ENCODE measurements at regions of chr6 and their contacts with region 1.

Region 1: GRCh38 chr6:41306187-41306854 is 19.8 kb upstream of the TREM1 start:
- DNase-seq: no peak
- ATAC-seq: peak; percentile 68
- H3K4me3 ChIP-seq: no peak overlapping the region
- H3K27ac ChIP-seq: no peak overlapping the region
- H3K4me1 ChIP-seq: peaks cover 3% of the 10 kb centered on the region; the same call in 1 of the 2 replicates
- H3K27me3 ChIP-seq: no peaks in the 10 kb centered on the region; a peak in 1 of 4 replicates
- CTCF ChIP-seq: peak; percentile 50 to 66 (median 63)
- EP300 ChIP-seq: no peak
- POLR2A ChIP-seq: no peak
- RAD21 ChIP-seq: peak; percentile 74

Region 2: GRCh38 chr6:41072676-41073623 is 233.4 kb before region 1 on chr6 and contains the start of gene NFYA:
- CTCF ChIA-PET with region 1: interaction called, 11 read pairs
- POLR2A ChIA-PET with region 1: interaction called, 4 read pairs
- RAD21 ChIA-PET with region 1: no interaction called
- SMC1A ChIA-PET with region 1: no interaction called
- in situ Hi-C with region 1: no loop called
- intact Hi-C with region 1: no loop called
- DNase-seq: no peak
- ATAC-seq: peak; percentile 85
- H3K4me3 ChIP-seq: peak within 1 kb of the TSS; percentile 88
- H3K27ac ChIP-seq: peak within 1 kb of the TSS; percentile 99
- H3K4me1 ChIP-seq: peaks cover 7% of the 10 kb centered on the region; the same call in 1 of the 2 replicates
- H3K27me3 ChIP-seq: no peaks in the 10 kb centered on the region
- CTCF ChIP-seq: peak in 2 of 3 experiments; percentile 32 to 34; a peak in 4 of 6 replicates
- EP300 ChIP-seq: no peak
- POLR2A ChIP-seq: peak; percentile 33
- RAD21 ChIP-seq: no peak
- polyA plus RNA-seq, gene NFYA: 6.4 to 7.3 TPM

Region 3: GRCh38 chr6:41159415-41160082 is 146.8 kb before region 1 on chr6:
- CTCF ChIA-PET with region 1: no interaction called
- POLR2A ChIA-PET with region 1: no interaction called
- RAD21 ChIA-PET with region 1: no interaction called
- SMC1A ChIA-PET with region 1: no interaction called
- in situ Hi-C with region 1: no loop called
- intact Hi-C with region 1: no loop called
- DNase-seq: no peak
- ATAC-seq: no peak
- H3K4me3 ChIP-seq: no peak overlapping the region
- H3K27ac ChIP-seq: no peak overlapping the region
- H3K4me1 ChIP-seq: no peaks in the 10 kb centered on the region
- H3K27me3 ChIP-seq: peaks cover 0 to 2% of the 10 kb centered on the region in 2 experiments; a peak in 1 of 4 replicates
- CTCF ChIP-seq: no peak
- EP300 ChIP-seq: no peak
- POLR2A ChIP-seq: no peak
- RAD21 ChIP-seq: no peak

Region 4: DNA sequence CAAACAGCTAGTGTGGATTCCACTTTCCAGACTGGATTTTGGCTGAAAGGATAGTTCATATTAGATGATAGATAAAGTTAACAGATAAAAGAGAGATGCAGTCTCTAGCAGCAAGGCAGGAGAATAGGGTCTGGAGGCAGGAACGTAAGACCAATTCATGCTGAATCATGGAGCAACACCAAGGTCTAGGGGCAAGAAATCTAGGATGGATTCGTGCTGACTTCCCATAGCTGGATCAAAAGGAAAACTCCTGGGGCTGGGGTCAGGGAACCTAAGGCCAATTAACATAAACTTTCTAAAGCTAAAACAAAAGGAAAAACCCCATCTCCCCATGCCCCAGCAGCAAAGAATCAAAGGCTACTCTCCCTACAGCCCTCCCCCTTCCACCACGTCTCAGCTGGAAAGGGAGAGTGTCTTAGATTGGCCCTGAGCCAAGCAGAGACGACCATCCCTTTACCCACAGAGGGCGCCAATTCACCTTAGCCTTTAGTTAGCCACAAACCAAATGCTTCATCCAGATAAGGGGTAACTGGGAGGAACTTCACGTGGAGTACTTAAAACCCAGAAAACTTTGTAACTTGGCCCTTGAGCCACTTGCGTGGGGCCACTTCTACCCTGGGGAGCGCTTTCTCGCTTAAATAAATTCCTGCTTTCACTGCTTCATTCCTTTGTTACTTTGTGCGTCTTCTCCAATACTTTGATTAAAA is 27.5 kb before region 1 on chr6:
- CTCF ChIA-PET with region 1: interaction called, 68 read pairs
- POLR2A ChIA-PET with region 1: interaction called, 3 read pairs
- RAD21 ChIA-PET with region 1: interaction called, 23 read pairs
- SMC1A ChIA-PET with region 1: interaction called, 28 read pairs
- in situ Hi-C with region 1: no loop called
- intact Hi-C with region 1: no loop called
- DNase-seq: no peak
- ATAC-seq: peak; percentile 78
- H3K4me3 ChIP-seq: no peak overlapping the region
- H3K27ac ChIP-seq: no peak overlapping the region
- H3K4me1 ChIP-seq: no peaks in the 10 kb centered on the region
- H3K27me3 ChIP-seq: no peaks in the 10 kb centered on the region
- CTCF ChIP-seq: peak; percentile 58 to 65 (median 65)
- EP300 ChIP-seq: no peak
- POLR2A ChIP-seq: no peak
- RAD21 ChIP-seq: peak; percentile 79

Region 5: DNA sequence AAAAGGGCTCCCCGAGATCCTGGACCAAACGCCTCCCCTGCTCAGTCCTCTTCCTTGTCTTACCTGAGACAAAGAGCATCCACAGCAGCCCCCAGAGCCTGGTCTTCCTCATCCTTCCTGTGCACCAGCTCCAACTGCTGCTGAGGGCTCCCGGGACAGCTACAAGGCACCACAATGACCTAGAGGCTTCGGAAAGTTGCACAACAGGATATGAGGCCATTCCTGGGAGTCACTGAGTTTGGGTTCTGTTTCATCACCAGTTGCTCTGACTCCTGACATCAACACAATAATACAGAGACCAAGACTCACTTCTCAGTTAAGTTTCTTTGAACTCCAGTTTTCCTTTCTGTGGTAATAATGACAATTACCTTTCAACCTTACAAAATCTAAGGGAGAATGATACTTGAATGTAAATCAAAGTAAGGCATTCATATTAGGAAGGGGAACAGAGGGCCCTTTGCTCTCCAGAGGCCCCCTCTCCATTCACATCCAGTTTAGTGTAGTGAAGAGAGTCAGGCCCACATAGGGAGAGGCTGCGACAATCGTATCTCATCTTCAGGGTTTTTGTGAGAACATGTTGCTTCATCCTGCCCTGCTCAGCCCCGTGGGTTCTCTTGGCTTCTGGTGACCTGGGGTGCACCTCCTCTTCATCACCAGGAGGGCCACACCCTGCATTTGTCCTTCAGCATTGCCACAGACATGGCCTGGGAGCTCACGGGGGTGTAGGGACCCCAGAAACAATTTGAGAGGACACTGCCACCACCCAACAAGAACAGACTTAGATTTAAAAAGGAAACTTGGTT is 19.6 kb before region 1 on chr6 and contains the start of gene TREM1:
- CTCF ChIA-PET with region 1: interaction called, 53 read pairs
- POLR2A ChIA-PET with region 1: interaction called, 4 read pairs
- RAD21 ChIA-PET with region 1: interaction called, 8 read pairs
- SMC1A ChIA-PET with region 1: interaction called, 33 read pairs
- in situ Hi-C with region 1: no loop called
- intact Hi-C with region 1: no loop called
- DNase-seq: no peak
- ATAC-seq: no peak
- H3K4me3 ChIP-seq: no peak within 1 kb of the TSS
- H3K27ac ChIP-seq: no peak within 1 kb of the TSS
- H3K4me1 ChIP-seq: no peaks in the 10 kb centered on the region
- H3K27me3 ChIP-seq: no peaks in the 10 kb centered on the region
- CTCF ChIP-seq: no peak
- EP300 ChIP-seq: no peak
- POLR2A ChIP-seq: no peak
- RAD21 ChIP-seq: no peak
- polyA plus RNA-seq, gene TREM1: 0.11 to 0.69 TPM

Region 6: GRCh38 chr6:41560431-41561192 is 254.3 kb after region 1 on chr6:
- CTCF ChIA-PET with region 1: no interaction called
- POLR2A ChIA-PET with region 1: no interaction called
- RAD21 ChIA-PET with region 1: no interaction called
- SMC1A ChIA-PET with region 1: no interaction called
- in situ Hi-C with region 1: no loop called
- intact Hi-C with region 1: no loop called
- DNase-seq: no peak
- ATAC-seq: peak; percentile 92
- H3K4me3 ChIP-seq: peak overlapping the region; percentile 53
- H3K27ac ChIP-seq: peak overlapping the region; percentile 42; the same call in 1 of the 2 replicates
- H3K4me1 ChIP-seq: peaks cover 5% of the 10 kb centered on the region; the same call in 1 of the 2 replicates
- H3K27me3 ChIP-seq: no peaks in the 10 kb centered on the region
- CTCF ChIP-seq: 0 out of 6 replicates have a peak, but pooled peaks of 1 of the 3 experiments have one; percentile 3
- EP300 ChIP-seq: no peak
- POLR2A ChIP-seq: peak; percentile 60
- RAD21 ChIP-seq: 0 out of 2 replicates have a peak, but pooled peaks have one; percentile 4

Region 7: DNA sequence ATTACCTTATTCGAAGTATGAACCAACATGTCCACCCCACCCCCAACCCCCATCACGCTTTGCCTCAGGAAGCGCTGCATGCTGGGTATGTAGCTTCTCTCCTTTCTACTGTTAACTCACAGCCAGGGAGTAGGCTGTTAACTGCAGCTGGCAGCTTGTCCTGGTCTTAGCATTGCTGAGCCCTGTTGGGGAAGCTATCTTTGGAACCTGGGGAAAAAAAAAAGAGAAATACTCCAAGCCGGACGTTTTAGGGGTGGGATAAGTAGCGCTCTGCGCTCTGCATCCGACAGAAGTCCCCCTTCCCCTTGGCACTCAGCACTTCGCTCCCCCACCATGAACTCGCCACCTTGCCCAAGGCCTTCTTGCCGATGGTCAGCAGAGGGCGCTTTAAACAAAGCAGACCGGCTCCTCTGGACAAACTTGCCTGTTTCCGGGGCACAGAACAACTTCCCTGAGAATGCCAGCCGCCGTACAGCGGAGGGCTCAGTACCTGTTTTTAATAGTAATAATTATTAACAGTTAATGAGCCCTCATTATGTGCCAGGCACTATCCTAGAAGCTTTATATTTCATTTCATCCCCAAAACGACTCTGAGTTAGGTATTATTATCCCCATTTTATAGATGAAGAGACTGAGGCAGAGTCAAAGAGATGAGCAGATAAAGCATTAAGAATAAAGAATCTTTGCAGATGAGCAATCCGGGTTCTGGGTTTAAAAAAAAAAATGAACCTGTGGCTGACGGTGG is 296.7 kb after region 1 on chr6:
- CTCF ChIA-PET with region 1: interaction called, 3 read pairs
- POLR2A ChIA-PET with region 1: no interaction called
- RAD21 ChIA-PET with region 1: no interaction called
- SMC1A ChIA-PET with region 1: no interaction called
- in situ Hi-C with region 1: no loop called
- intact Hi-C with region 1: loop called (anchors 5 kb)
- DNase-seq: peak; percentile 24
- ATAC-seq: peak; percentile 94
- H3K4me3 ChIP-seq: no peak overlapping the region
- H3K27ac ChIP-seq: no peak overlapping the region
- H3K4me1 ChIP-seq: no peaks in the 10 kb centered on the region
- H3K27me3 ChIP-seq: no peaks in the 10 kb centered on the region; a peak in 1 of 4 replicates
- CTCF ChIP-seq: peak; percentile 93 to 96 (median 96)
- EP300 ChIP-seq: no peak
- POLR2A ChIP-seq: no peak
- RAD21 ChIP-seq: peak; percentile 90